Naive thymus-derived CD4-positive, alpha-beta T cell (primary cell): ENCODE measurements at regions of chr6 and their contacts with region 1.

Region 1: GRCh38 chr6:32127717-32128592 is at the start of gene ATF6B:
- DNase-seq: peak; percentile 80 to 100 (median 96)
- ATAC-seq: peak; percentile 97
- H3K4me3 ChIP-seq: peak within 1 kb of the TSS; percentile 96
- H3K4me3 Mint-ChIP-seq: peak within 1 kb of the TSS; percentile 96 to 100 (median 98)
- H3K27ac ChIP-seq: peak within 1 kb of the TSS; percentile 92
- H3K27ac Mint-ChIP-seq: peak within 1 kb of the TSS; percentile 83 to 98 (median 97)
- H3K4me1 ChIP-seq: peaks cover 33% of the 10 kb centered on the region in 2 donors
- H3K4me1 Mint-ChIP-seq: peaks cover 38 to 66% (median 53%) of the 10 kb centered on the region in 7 donors
- H3K27me3 ChIP-seq: no peaks in the 10 kb centered on the region
- H3K27me3 Mint-ChIP-seq: peaks cover 0 to 4% (median 0%) of the 10 kb centered on the region in 5 donors
- total RNA-seq, gene ATF6B: 115 to 168 (median 142) TPM

Region 2: GRCh38 chr6:31702819-31703522 is 425.0 kb before region 1 on chr6 and contains the start of gene ABHD16A:
- CTCF ChIA-PET with region 1: no interaction called
- POLR2A ChIA-PET with region 1: no interaction called
- intact Hi-C with region 1: loop called in 1 of 2 experiments (anchors 1 kb)
- DNase-seq: peak; percentile 93 to 97 (median 96)
- ATAC-seq: peak; percentile 95
- H3K4me3 ChIP-seq: peak within 1 kb of the TSS; percentile 98
- H3K4me3 Mint-ChIP-seq: peak within 1 kb of the TSS; percentile 92 to 100 (median 98)
- H3K27ac ChIP-seq: peak within 1 kb of the TSS; percentile 98
- H3K27ac Mint-ChIP-seq: peak within 1 kb of the TSS; percentile 95 to 98 (median 97)
- H3K4me1 ChIP-seq: peaks cover 21 to 28% of the 10 kb centered on the region in 2 donors
- H3K4me1 Mint-ChIP-seq: peaks cover 16 to 39% (median 31%) of the 10 kb centered on the region in 7 donors
- H3K27me3 ChIP-seq: no peaks in the 10 kb centered on the region
- H3K27me3 Mint-ChIP-seq: peaks cover 0 to 2% (median 0%) of the 10 kb centered on the region in 5 donors
- total RNA-seq, gene ABHD16A: 60.1 to 71.7 (median 65.2) TPM

Region 3: GRCh38 chr6:32060966-32061655 is 66.8 kb before region 1 on chr6:
- CTCF ChIA-PET with region 1: no interaction called
- POLR2A ChIA-PET with region 1: no interaction called
- intact Hi-C with region 1: no loop called
- DNase-seq: no peak
- ATAC-seq: no peak
- H3K4me3 ChIP-seq: no peak overlapping the region
- H3K4me3 Mint-ChIP-seq: no peak overlapping the region
- H3K27ac ChIP-seq: no peak overlapping the region
- H3K27ac Mint-ChIP-seq: no peak overlapping the region
- H3K4me1 ChIP-seq: no peaks in the 10 kb centered on the region
- H3K4me1 Mint-ChIP-seq: no peaks in the 10 kb centered on the region
- H3K27me3 ChIP-seq: no peaks in the 10 kb centered on the region
- H3K27me3 Mint-ChIP-seq: peaks cover 0 to 4% (median 0%) of the 10 kb centered on the region in 5 donors

Region 4: GRCh38 chr6:32087574-32088486 is 40.1 kb before region 1 on chr6:
- CTCF ChIA-PET with region 1: no interaction called
- POLR2A ChIA-PET with region 1: no interaction called
- intact Hi-C with region 1: loop called in 1 of 2 experiments (anchors 1 kb)
- DNase-seq: peak; percentile 39 to 67 (median 58)
- ATAC-seq: peak; percentile 88
- H3K4me3 ChIP-seq: no peak overlapping the region
- H3K4me3 Mint-ChIP-seq: peak overlapping the region in 5 of 10 donors; percentile 21 to 54 (median 25)
- H3K27ac ChIP-seq: no peak overlapping the region
- H3K27ac Mint-ChIP-seq: no peak overlapping the region
- H3K4me1 ChIP-seq: no peaks in the 10 kb centered on the region
- H3K4me1 Mint-ChIP-seq: peaks cover 0 to 7% (median 0%) of the 10 kb centered on the region in 7 donors
- H3K27me3 ChIP-seq: peaks cover 0 to 5% of the 10 kb centered on the region in 2 donors
- H3K27me3 Mint-ChIP-seq: peaks cover 17 to 58% (median 21%) of the 10 kb centered on the region in 5 donors

Region 5: DNA sequence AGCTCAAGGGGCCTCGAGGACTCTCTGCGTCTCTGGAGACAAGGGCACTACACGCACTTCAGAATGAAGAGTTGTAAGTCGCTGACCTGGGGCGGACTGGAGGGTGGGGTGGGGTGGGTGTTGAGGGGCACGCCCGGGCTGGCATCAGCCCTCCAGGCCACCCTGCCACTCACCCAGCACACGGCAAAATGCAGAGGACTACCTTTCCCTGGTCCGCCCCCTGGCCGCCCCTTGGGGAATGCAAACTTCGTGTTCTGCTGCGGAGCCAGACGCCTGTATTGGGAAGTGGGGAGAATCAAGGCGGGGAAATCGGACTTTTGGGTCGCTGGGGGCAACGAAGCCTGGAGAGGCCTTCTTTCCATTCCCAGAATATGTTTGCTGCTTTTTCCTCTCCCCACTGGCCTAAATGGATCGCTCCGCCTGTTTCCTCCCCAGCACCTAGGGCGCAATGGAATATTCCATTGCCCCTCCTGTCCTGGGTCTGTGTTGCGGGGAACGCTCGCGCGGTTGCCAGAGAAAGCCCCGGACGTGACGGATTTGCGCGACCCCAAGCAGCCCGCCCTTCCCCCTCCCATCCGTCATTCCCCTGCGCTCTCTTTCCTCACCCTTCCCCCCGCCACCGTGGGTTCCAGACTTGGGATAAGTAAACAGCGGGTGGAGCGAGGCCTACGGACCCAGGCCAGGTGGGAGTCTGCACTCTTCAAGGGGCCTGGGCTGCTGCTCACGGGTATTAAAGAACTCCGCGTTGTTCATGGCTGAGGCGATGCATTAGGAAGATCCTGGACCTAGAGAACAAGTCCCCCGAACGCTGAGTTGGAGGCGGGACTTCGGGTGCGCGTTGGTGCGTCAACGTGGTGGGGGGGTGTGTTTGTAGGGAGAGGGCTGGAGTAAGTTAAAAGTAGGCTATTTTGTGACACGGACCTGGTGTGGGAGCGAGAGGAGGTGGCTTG is 25.9 kb after region 1 on chr6 and contains the start of gene PPT2:
- CTCF ChIA-PET with region 1: interaction called, 3 read pairs
- POLR2A ChIA-PET with region 1: interaction called, 3 read pairs
- intact Hi-C with region 1: loop called (anchors 1 kb)
- DNase-seq: peak; percentile 34 to 85 (median 72)
- ATAC-seq: peak; percentile 82
- H3K4me3 ChIP-seq: peak within 1 kb of the TSS; percentile 68
- H3K4me3 Mint-ChIP-seq: peak within 1 kb of the TSS; percentile 87 to 100 (median 98)
- H3K27ac ChIP-seq: peak within 1 kb of the TSS; percentile 82
- H3K27ac Mint-ChIP-seq: peak within 1 kb of the TSS; percentile 87 to 98 (median 92)
- H3K4me1 ChIP-seq: peaks cover 10 to 35% of the 10 kb centered on the region in 2 donors
- H3K4me1 Mint-ChIP-seq: peaks cover 42 to 74% (median 65%) of the 10 kb centered on the region in 7 donors
- H3K27me3 ChIP-seq: no peaks in the 10 kb centered on the region
- H3K27me3 Mint-ChIP-seq: peaks cover 0 to 34% (median 12%) of the 10 kb centered on the region in 5 donors
- total RNA-seq, gene PPT2: 11.8 to 21.9 (median 15.8) TPM

Region 6: GRCh38 chr6:32190054-32190851 is 62.3 kb after region 1 on chr6 and contains the start of gene PBX2:
- CTCF ChIA-PET with region 1: interaction called, 8 read pairs
- POLR2A ChIA-PET with region 1: interaction called, 79 read pairs
- intact Hi-C with region 1: loop called (anchors 1 kb)
- DNase-seq: peak; percentile 35 to 82 (median 76)
- ATAC-seq: peak; percentile 80
- H3K4me3 ChIP-seq: peak within 1 kb of the TSS; percentile 94
- H3K4me3 Mint-ChIP-seq: peak within 1 kb of the TSS; percentile 97 to 100 (median 98)
- H3K27ac ChIP-seq: peak within 1 kb of the TSS; percentile 97
- H3K27ac Mint-ChIP-seq: peak within 1 kb of the TSS; percentile 86 to 100 (median 97)
- H3K4me1 ChIP-seq: peaks cover 37 to 46% of the 10 kb centered on the region in 2 donors
- H3K4me1 Mint-ChIP-seq: peaks cover 52 to 62% (median 58%) of the 10 kb centered on the region in 7 donors
- H3K27me3 ChIP-seq: no peaks in the 10 kb centered on the region
- H3K27me3 Mint-ChIP-seq: no peaks in the 10 kb centered on the region
- total RNA-seq, gene PBX2: 105 to 221 (median 144) TPM